GM10248 (cell line): ENCODE measurements at regions of chr14 and their contacts with region 1.

Region 1: DNA sequence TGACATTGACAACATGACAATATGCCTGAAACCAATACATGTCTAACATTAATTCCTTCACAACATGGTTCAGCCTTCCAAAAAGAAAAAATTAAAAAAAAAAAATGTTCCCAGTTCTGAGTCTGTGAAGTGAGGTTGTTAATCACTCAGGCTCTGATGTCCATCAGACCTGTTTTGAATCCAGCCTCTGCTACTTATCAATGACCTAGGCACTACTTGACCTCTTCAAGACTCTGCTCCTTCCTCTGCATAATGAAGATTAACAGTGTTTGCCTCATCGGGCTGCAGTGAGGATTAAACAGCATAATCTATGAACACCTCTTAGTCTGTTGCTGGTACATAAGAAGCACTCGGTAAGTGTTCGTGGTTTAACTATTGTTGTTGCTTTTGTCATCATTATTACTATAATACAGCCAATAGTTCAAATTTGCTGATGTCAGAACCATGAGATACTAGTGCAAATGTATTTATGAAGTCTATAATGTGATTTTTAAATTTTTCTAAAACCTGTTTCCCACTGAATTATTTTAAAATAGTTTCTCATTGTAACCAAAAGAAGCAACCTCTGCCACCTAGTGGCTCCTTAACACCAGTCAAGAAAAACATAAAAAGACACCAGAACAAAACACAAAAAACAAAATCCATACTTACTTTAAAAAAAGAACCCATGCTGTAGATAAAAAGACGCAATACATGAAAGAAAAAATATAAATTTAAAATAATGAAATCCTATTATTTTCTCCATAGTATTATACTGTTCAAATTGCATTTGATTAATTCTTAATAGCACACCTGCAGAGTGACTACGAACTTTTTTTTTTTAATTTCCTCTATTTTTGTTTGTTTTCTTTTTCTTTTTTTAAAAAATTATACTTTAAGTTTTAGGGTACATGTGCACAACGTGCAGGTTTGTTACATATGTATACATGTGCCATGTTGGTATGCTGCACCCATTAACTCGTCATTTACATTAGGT is 20.3 kb upstream of the TMX1 start:
- DNase-seq: no peak
- CTCF ChIP-seq: peak; percentile 59

Region 2: GRCh38 chr14:51157012-51157411 is 62.7 kb before region 1 on chr14:
- CTCF ChIA-PET with region 1: interaction called, 19 read pairs
- POLR2A ChIA-PET with region 1: no interaction called
- DNase-seq: no peak
- CTCF ChIP-seq: peak; percentile 36

Region 3: DNA sequence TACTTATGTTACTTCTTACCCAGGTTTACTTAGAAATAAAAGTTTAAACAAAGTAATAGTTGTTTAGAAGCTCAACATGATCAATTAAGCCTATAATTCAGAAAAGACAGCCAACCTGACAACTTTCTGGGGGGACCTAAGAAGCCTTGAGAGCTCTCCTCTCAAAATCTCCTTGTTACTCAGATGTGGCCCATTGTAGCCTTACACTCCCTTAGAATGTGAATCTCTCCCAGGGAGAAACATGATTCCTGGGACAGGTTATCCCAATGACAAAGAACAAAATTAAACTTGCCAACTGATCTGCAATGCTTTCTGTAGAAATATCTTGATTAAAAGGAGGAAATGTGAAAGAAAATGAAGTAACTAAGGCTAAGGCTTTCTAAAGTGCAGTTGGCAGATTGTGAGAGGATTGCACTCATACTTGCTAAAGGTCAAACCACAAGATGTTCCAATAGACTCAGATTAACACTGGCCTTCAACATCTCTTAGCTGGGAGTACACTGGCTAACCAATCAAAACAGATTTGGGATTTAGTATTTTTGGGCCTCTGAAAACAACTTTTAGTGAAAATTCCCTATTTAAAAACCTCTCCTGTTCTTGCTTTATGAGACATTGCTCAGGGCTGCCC is 52.1 kb before region 1 on chr14:
- CTCF ChIA-PET with region 1: no interaction called
- POLR2A ChIA-PET with region 1: no interaction called
- DNase-seq: no peak
- CTCF ChIP-seq: no peak

Region 4: DNA sequence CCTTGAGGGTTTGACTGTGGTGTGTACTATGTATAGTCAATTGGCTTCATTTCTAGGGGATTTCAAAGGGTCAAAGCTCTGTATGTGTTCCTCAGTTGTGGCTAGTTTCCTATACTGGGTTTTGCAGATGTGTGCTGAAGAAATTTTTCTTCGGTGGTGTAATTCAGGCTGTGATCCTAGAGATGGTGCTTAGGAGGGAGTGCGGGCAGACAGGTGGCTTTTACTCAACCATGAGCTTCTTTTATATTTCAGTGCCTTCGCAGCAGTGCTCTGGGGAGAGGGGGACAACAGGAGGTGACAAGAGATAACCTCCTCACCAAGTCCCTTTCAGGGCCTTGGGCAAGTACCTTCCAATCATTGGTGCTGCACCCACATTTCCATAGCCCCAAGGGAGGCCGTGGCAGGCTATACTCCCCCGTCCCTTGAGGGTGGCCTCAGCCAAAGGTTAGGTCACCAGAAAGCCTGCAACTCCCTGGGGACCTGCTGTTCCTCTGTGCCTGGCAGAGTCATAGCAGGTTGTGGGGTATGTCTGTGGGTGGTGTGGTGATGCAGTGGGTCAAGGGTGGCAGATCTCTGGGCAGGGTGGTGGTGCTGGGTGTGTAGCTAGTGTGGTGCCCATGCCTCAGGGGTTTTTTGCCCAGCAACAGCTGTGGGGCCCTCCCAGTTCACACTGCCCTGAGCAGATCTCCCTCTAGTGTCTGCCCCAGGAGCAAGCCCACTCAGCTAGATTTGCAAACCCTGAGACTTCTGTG is 16.7 kb before region 1 on chr14:
- CTCF ChIA-PET with region 1: interaction called, 11 read pairs
- POLR2A ChIA-PET with region 1: no interaction called
- DNase-seq: peak; percentile 35
- CTCF ChIP-seq: peak; percentile 48